ENCODE measurements at regions of chr7 and their contacts with region 1.

Region 1: DNA sequence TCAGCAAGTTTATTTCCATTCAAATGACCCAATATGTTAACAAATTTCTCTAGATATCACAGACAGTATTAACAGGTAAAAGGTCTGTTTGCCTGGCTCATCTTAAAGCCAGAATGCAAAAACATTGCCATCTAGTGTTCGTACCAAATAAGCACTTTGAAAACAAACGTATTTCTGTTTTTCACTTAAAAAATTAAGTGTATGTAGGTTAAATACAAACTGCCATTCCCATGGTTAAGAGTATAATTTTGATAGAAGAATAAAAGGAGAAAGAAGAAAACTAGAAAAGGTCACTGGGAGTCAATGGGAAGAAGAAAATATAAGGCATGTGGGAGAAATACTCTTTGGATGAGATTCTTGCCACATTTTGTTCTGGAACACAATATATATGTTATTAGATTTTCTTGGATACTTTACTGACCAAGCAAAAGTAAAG is 51.0 kb downstream of the ORC5 start:
- DNase-seq: peak; percentile 6
- CTCF ChIP-seq: peak; percentile 53

Region 2: GRCh38 chr7:103462358-103462757 is 694.5 kb before region 1 on chr7:
- in situ Hi-C with region 1: no loop called
- DNase-seq: no peak
- CTCF ChIP-seq: no peak

Region 3: DNA sequence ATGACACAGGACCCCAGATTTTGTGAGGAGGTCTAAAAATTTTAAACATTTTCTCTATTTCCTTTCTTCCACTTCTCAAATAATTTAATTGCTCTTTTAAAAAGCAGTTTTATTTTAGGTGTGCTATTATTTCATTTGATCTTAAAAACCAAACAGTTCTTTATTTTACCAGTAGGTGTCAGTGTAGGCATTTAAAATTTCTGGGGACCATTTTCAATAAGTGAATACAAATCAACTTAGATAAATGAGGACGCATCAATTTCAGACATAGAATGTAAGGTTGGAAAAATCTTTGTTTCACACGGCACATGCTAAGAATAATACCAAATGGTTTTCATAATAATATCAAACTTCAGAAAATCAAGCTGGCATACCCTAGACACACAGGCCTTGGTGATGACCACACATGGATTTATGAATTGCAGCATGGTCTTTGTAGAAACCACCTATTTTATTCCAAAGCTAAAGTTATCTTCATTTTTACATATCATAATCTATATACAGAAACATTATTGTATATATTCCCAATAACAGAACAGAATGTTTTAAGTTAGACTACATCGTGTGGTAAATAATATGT is 583.3 kb before region 1 on chr7:
- in situ Hi-C with region 1: loop called (anchors 25 kb)
- DNase-seq: peak; percentile 17
- CTCF ChIP-seq: peak; percentile 44

Region 4: GRCh38 chr7:104358446-104359145 is 201.7 kb after region 1 on chr7:
- in situ Hi-C with region 1: no loop called
- DNase-seq: no peak
- CTCF ChIP-seq: no peak

Measured in GM13977 (cell line).